Mammary epithelial cell (primary cell): ENCODE measurements at regions of chr11 and their contacts with region 1.

Region 1: GRCh38 chr11:130213143-130213978 is 53.8 kb downstream of the ST14 start:
- DNase-seq: peak; percentile 27
- H3K4me3 ChIP-seq: no peak overlapping the region
- H3K27ac ChIP-seq: no peak overlapping the region
- H3K4me1 ChIP-seq: no peaks in the 10 kb centered on the region
- H3K27me3 ChIP-seq: no peaks in the 10 kb centered on the region
- CTCF ChIP-seq: peak; percentile 60 to 91

Region 2: DNA sequence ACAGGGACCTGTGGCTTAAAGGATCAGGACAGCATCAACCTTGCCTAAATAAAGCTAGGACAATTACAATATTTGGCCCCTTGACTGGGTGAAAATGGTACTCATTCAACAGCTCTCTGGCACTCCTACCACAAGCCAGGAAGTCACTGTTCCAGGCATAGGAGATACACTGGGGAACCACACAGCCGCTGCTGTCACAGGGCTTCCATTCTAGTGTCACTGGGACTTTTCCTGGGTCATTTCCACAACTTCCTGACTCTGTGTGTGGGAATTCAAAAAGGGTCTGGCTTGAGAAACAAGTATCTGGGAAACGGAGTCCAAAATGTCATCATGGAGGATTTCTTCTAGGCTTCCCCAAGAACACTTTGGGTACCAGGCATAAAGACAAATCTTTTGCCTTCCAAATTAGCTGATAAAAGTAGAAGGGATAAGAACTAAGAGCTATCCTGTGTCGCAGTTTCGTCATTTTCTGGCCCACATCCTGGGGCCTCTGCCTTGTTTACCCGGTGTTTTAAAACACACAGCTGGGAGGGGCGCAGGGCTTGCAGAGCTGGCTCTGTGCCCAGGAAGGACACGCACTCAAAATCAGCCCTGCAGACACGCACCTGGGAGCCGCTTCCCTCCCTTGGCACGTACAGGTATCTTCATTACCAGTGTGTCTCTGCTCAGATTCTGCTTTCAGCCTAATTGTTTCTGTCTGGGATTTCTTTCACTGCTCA is 359.7 kb before region 1 on chr11:
- CTCF ChIA-PET with region 1: no interaction called
- dilution Hi-C with region 1: no loop called
- in situ Hi-C with region 1: no loop called
- intact Hi-C with region 1: no loop called
- DNase-seq: peak; percentile 79
- H3K4me3 ChIP-seq: no peak overlapping the region
- H3K27ac ChIP-seq: no peak overlapping the region
- H3K4me1 ChIP-seq: peaks cover 17% of the 10 kb centered on the region
- H3K27me3 ChIP-seq: no peaks in the 10 kb centered on the region
- CTCF ChIP-seq: no peak

Region 3: GRCh38 chr11:130131961-130132850 is 81.2 kb before region 1 on chr11:
- CTCF ChIA-PET with region 1: no interaction called
- dilution Hi-C with region 1: no loop called
- in situ Hi-C with region 1: no loop called
- intact Hi-C with region 1: no loop called
- DNase-seq: peak; percentile 65
- H3K4me3 ChIP-seq: no peak overlapping the region
- H3K27ac ChIP-seq: no peak overlapping the region
- H3K4me1 ChIP-seq: peaks cover 4% of the 10 kb centered on the region
- H3K27me3 ChIP-seq: no peaks in the 10 kb centered on the region
- CTCF ChIP-seq: peak; percentile 88 to 92

Region 4: GRCh38 chr11:130168105-130168504 is 45.3 kb before region 1 on chr11:
- CTCF ChIA-PET with region 1: interaction called, 23 read pairs
- dilution Hi-C with region 1: no loop called
- in situ Hi-C with region 1: no loop called
- intact Hi-C with region 1: no loop called
- DNase-seq: peak; percentile 72
- H3K4me3 ChIP-seq: no peak overlapping the region
- H3K27ac ChIP-seq: no peak overlapping the region
- H3K4me1 ChIP-seq: peaks cover 24% of the 10 kb centered on the region
- H3K27me3 ChIP-seq: no peaks in the 10 kb centered on the region
- CTCF ChIP-seq: no peak

Region 5: GRCh38 chr11:130370845-130371590 is 157.7 kb after region 1 on chr11:
- CTCF ChIA-PET with region 1: interaction called, 3 read pairs
- dilution Hi-C with region 1: no loop called
- in situ Hi-C with region 1: no loop called
- intact Hi-C with region 1: loop called (anchors 1 kb)
- DNase-seq: no peak
- H3K4me3 ChIP-seq: no peak overlapping the region
- H3K27ac ChIP-seq: no peak overlapping the region
- H3K4me1 ChIP-seq: no peaks in the 10 kb centered on the region
- H3K27me3 ChIP-seq: peaks cover 3% of the 10 kb centered on the region
- CTCF ChIP-seq: peak in 1 of 2 donors; percentile 42

Region 6: DNA sequence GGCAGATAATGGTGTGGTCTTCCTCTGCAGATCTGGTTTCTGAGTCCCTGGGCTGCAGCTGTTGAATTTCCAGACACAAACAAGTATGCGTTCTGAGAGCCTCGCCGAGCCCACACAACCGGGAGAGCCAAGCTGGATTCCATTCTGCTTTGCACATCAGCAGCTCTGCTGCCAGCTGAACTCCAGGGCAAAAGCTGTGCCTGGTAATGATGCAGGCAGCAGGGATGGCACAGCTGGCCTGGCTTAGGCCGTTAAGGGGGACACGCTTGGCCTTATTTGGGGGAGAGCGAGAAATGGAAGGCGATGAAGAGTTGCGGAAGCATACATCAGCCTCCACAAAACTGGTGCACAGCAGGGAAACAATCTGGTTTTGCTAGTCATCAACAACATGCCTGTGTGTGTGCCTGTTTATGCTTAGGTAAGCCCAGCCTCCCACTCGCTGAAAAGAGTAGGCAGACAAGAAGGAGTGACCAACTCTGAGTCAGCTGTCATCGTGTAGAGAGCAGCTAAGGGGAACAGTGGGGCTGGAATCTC is 190.0 kb after region 1 on chr11:
- CTCF ChIA-PET with region 1: no interaction called
- dilution Hi-C with region 1: no loop called
- in situ Hi-C with region 1: loop called in 1 of 2 experiments (anchors 25 kb)
- intact Hi-C with region 1: no loop called
- DNase-seq: peak; percentile 89
- H3K4me3 ChIP-seq: peak overlapping the region in 2 of 3 experiments; percentile 14 to 17
- H3K27ac ChIP-seq: no peak overlapping the region
- H3K4me1 ChIP-seq: peaks cover 31% of the 10 kb centered on the region
- H3K27me3 ChIP-seq: no peaks in the 10 kb centered on the region
- CTCF ChIP-seq: no peak

Region 7: DNA sequence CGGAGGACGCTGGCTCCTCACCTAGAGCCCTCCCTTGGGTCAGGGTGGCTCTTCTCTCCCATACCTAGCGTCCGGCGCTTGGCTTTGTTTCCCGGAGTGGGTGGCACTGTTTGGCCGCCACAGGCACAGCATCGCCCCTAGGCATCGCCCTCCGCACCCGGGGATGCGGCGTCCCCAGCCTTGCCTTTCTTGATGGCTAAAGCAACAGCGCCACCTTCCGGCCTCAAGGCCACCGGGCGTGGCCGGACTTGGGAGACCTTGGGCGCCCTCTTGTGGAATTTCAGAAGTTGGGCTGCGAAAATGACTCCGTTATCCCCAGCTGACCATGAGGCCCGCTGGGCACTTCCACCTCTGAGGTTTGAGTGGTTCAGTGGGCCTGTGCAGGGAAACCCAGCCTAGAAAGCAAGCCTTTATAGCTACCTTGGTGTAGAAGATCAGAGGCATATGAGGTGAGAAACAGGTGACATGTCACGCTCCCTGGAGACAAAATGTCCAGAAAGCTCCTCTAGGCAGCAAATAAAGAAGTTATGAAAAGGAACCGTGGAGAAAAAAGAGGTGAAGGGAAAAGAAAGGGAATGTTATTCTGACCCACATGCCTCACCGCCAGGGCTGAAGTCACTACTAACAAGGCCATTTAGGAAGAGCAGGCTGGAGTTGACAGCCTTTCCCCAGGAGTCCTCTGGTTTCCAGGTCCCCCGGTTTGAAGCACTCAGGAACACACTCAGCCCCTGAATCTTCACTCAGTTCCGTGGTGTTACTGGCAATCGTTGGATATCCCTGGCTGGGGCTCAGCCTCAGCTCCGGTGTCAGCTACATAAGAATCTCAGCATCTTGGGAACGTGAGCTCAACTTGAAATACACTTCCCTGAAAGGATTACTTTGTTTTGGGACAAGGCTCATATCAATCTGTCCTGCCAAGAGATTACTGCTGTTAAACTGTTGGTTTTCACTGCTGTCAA is 648.8 kb after region 1 on chr11:
- CTCF ChIA-PET with region 1: no interaction called
- dilution Hi-C with region 1: loop called (anchors 25 kb)
- in situ Hi-C with region 1: loop called in 1 of 2 experiments (anchors 25 kb)
- intact Hi-C with region 1: loop called (anchors 1 kb)
- DNase-seq: peak; percentile 70
- H3K4me3 ChIP-seq: peak overlapping the region in 1 of 3 experiments; percentile 23
- H3K27ac ChIP-seq: no peak overlapping the region
- H3K4me1 ChIP-seq: peaks cover 3% of the 10 kb centered on the region
- H3K27me3 ChIP-seq: no peaks in the 10 kb centered on the region
- CTCF ChIP-seq: peak; percentile 98 to 100